AG04449 (cell line): ENCODE measurements at regions of chr20 and their contacts with region 1.

Region 1: DNA sequence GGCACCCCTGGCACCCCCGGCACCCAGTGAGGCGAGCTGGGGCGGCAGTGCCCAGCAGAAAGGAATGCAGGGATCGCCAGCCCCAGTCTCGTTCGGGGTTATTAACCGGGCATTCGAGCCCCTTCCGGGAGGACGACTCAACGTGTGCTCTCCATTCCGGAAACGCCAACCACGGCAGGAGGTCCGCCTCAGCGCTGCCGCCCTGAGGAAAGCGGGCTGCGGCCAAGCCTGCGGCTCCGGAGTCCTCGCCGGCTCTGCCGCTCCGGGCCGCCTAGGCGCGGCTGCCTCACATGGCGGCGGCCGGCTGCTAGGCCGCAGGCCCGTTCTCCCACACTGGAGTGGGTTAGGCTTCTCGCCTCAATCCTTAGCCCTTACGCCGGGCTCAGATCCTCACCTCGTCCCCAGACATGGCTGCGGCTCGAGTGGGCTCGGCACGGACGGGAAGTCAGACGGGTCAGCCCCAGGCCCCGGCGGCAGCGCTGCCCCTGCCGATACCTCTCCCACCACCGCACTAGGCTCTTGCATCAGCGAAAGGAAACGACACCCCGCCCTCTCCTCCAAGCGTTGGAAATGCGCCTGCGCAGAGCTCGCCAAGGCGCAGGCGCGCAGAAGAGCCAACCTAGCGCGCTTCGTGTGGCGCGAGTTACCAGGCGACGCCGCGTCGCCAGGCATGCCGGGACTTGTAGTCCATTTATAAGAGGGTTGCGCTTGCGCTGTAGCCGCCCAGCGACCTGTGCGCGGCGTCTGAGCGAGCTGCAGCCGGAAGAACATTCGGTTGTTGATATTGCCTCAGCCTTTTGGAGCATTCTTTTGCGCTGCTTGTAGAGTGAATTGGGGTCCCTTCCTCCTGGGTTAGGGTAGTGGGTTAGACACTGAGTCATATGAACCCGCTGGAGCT is at the start of gene EIF2S2:
- DNase-seq: peak; percentile 94
- H3K4me3 ChIP-seq: peak within 1 kb of the TSS; percentile 92
- CTCF ChIP-seq: no peak

Region 2: DNA sequence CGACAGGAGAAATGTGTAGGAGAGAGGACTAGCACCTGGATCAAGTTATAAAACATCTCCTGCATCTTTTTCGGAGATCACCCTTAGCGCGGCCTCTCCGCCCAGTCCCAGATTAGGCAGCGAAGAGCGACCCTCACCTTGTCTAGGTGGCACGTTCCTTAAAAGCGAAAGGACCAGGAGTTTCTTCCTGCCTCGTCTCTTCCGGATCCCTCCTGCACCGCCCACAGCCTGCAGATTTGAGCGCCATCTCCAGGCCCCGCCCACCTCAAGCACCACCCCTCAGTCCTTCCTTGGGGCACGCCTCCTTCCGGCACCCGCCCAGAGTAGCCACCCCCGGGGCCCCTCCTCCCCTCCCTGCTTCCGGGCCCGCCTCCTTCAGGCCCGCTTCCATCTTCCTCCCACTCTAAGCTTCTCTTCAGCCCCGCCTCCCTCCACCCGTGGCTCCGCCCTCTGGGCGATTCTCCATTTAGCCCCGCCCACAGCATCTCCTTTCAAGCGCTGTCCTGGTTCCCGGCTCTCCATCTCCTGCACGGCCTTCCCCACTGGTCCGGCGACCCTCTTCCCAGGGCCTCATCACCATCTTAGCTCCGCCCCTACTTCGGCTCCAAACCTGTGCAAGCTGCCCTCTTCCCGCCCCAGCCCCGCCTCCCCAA is 118.9 kb before region 1 on chr20:
- CTCF ChIA-PET with region 1: no interaction called
- POLR2A ChIA-PET with region 1: interaction called, 14 read pairs
- DNase-seq: peak; percentile 95
- H3K4me3 ChIP-seq: peak overlapping the region; percentile 93
- CTCF ChIP-seq: no peak

Region 3: DNA sequence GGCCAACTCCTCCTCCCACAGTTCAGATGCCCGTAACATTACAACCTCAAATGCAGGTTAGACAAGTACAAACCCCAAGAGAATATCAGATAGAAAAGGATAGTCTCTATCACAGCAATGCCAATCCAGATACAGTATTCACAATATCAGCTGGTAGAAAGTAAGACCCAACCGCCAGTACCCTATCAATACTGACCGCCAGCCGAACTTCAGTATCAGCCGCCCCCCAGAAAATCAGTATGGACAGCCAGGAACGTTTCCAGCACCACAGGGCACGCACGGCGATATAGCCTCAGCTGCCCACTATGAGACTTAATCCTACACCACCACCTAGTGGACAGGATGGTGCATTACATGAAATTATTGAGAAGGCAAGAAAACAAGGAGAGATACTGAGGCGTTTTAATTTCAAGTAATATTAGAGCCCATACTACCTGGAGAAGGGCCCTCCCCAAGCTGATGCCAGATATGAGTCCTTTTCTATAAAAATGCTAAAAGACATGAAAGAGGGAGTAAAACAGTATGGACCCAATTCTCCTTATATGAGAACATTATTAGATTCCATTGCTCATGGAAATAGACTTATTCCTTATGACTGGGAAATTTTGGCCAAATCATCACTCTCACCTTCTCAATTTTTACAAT is 17.7 kb after region 1 on chr20:
- CTCF ChIA-PET with region 1: interaction called, 13 read pairs
- POLR2A ChIA-PET with region 1: no interaction called
- DNase-seq: no peak
- H3K4me3 ChIP-seq: no peak overlapping the region
- CTCF ChIP-seq: peak; percentile 71

Region 4: DNA sequence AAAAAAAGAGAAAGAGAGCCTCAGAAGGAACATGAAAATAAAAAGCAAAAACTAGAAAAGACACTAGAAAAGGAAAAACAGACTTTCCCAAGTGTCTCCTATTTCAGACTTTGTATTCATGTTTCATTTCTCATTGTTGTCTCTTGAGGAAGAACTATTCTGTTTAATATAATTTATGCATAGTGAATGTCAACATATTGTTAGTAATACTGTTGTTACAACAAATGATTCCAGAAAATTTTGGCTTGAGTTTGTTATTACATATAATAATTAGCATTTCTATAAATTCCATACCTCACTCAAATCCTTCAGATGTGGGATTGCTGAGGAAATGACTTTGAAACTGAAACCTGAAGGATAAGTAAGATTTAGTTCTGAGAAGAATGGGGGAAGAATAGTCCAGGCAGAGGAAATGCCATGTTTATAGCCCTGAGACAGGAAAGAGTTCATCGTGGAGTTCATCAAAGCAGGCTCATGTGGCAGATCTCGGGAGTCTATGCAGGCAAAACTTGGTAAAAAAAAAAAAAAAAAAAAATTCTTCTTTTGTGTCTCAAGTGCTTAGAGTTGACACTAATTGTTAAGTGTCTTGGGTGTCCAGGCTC is 53.2 kb after region 1 on chr20:
- CTCF ChIA-PET with region 1: no interaction called
- POLR2A ChIA-PET with region 1: no interaction called
- DNase-seq: no peak
- H3K4me3 ChIP-seq: no peak overlapping the region
- CTCF ChIP-seq: no peak